CD14-positive monocyte (primary cell): ENCODE measurements at regions of chr10 and their contacts with region 1.

Region 1: GRCh38 chr10:110137142-110137545 is 70.3 kb upstream of the MXI1 start:
- DNase-seq: peak; percentile 75 to 92 (median 86)
- H3K4me3 ChIP-seq: peak overlapping the region; percentile 21 to 78 (median 69)
- H3K4me3 Mint-ChIP-seq: peak overlapping the region; percentile 44 to 76
- H3K27ac ChIP-seq: peak overlapping the region in 1 of 2 donors; percentile 77
- H3K27ac Mint-ChIP-seq: peak overlapping the region; percentile 66 to 94 (median 84)
- H3K4me1 ChIP-seq: peaks cover 32 to 38% of the 10 kb centered on the region in 2 donors
- H3K4me1 Mint-ChIP-seq: peaks cover 40% of the 10 kb centered on the region
- H3K27me3 ChIP-seq: no peaks in the 10 kb centered on the region
- H3K27me3 Mint-ChIP-seq: no peaks in the 10 kb centered on the region
- CTCF ChIP-seq: peak; percentile 76

Region 2: GRCh38 chr10:110210674-110211464 is 73.7 kb after region 1 on chr10:
- intact Hi-C with region 1: loop called (anchors 5 kb)
- DNase-seq: peak; percentile 93 to 96 (median 95)
- H3K4me3 ChIP-seq: peak overlapping the region; percentile 55 to 91 (median 63)
- H3K4me3 Mint-ChIP-seq: peak overlapping the region; percentile 93 to 94
- H3K27ac ChIP-seq: peak overlapping the region; percentile 54 to 93
- H3K27ac Mint-ChIP-seq: peak overlapping the region; percentile 93 to 99 (median 97)
- H3K4me1 ChIP-seq: peaks cover 57 to 71% of the 10 kb centered on the region in 2 donors
- H3K4me1 Mint-ChIP-seq: peaks cover 58% of the 10 kb centered on the region
- H3K27me3 ChIP-seq: peaks cover 0 to 7% of the 10 kb centered on the region in 2 donors
- H3K27me3 Mint-ChIP-seq: peaks cover 8 to 20% (median 14%) of the 10 kb centered on the region in 3 donors
- CTCF ChIP-seq: no peak

Region 3: GRCh38 chr10:110225756-110226542 is 88.8 kb after region 1 on chr10:
- intact Hi-C with region 1: loop called (anchors 2 kb)
- DNase-seq: peak; percentile 82 to 84 (median 84)
- H3K4me3 ChIP-seq: peak overlapping the region; percentile 94 to 99 (median 97)
- H3K4me3 Mint-ChIP-seq: peak overlapping the region; percentile 94 to 95
- H3K27ac ChIP-seq: peak overlapping the region; percentile 70 to 71
- H3K27ac Mint-ChIP-seq: peak overlapping the region; percentile 83 to 96 (median 91)
- H3K4me1 ChIP-seq: peaks cover 33 to 34% of the 10 kb centered on the region in 2 donors
- H3K4me1 Mint-ChIP-seq: peaks cover 41% of the 10 kb centered on the region
- H3K27me3 ChIP-seq: no peaks in the 10 kb centered on the region
- H3K27me3 Mint-ChIP-seq: no peaks in the 10 kb centered on the region
- CTCF ChIP-seq: peak; percentile 57

Region 4: GRCh38 chr10:110273474-110273873 is 136.3 kb after region 1 on chr10:
- intact Hi-C with region 1: loop called (anchors 2 to 5 kb)
- DNase-seq: peak; percentile 74 to 87 (median 85)
- H3K4me3 ChIP-seq: peak overlapping the region in 1 of 3 experiments; percentile 48
- H3K4me3 Mint-ChIP-seq: peak overlapping the region; percentile 57 to 81
- H3K27ac ChIP-seq: peak overlapping the region; percentile 47 to 68
- H3K27ac Mint-ChIP-seq: peak overlapping the region; percentile 69 to 95 (median 88)
- H3K4me1 ChIP-seq: peaks cover 31 to 35% of the 10 kb centered on the region in 2 donors
- H3K4me1 Mint-ChIP-seq: peaks cover 43% of the 10 kb centered on the region
- H3K27me3 ChIP-seq: no peaks in the 10 kb centered on the region
- H3K27me3 Mint-ChIP-seq: no peaks in the 10 kb centered on the region
- CTCF ChIP-seq: no peak

Region 5: GRCh38 chr10:110279407-110279986 is 142.4 kb after region 1 on chr10:
- intact Hi-C with region 1: loop called (anchors 2 to 5 kb)
- DNase-seq: peak; percentile 70 to 82 (median 76)
- H3K4me3 ChIP-seq: peak overlapping the region in 2 of 3 experiments; percentile 19 to 27
- H3K4me3 Mint-ChIP-seq: peak overlapping the region in 1 of 2 donors; percentile 63
- H3K27ac ChIP-seq: peak overlapping the region in 1 of 2 donors; percentile 57
- H3K27ac Mint-ChIP-seq: peak overlapping the region in 5 of 7 donors; percentile 7 to 77 (median 70)
- H3K4me1 ChIP-seq: peaks cover 4 to 6% of the 10 kb centered on the region in 2 donors
- H3K4me1 Mint-ChIP-seq: peaks cover 7% of the 10 kb centered on the region
- H3K27me3 ChIP-seq: no peaks in the 10 kb centered on the region
- H3K27me3 Mint-ChIP-seq: no peaks in the 10 kb centered on the region
- CTCF ChIP-seq: peak; percentile 70

Region 6: DNA sequence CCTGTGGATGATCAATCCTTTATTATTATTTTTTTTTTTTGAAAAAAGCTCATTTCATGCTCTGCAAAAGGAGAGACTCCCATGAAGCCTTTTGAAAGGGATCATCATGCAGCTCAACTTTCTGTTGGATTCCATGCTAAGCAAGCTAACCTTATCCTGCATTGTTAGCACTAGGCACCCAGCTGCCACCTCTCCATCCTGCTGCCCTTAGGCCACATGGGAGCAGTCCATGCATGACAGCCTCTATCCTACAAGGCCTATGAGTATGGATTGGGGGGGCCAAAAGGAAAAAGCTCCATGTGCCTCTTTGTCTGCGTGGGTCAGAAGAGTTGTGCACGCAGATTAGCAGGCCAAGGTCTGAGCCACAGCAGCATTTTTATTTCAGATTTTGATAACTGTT is 148.4 kb after region 1 on chr10:
- intact Hi-C with region 1: loop called in 1 of 2 experiments (anchors 5 kb)
- DNase-seq: no peak
- H3K4me3 ChIP-seq: no peak overlapping the region
- H3K4me3 Mint-ChIP-seq: no peak overlapping the region
- H3K27ac ChIP-seq: no peak overlapping the region
- H3K27ac Mint-ChIP-seq: no peak overlapping the region
- H3K4me1 ChIP-seq: no peaks in the 10 kb centered on the region
- H3K4me1 Mint-ChIP-seq: no peaks in the 10 kb centered on the region
- H3K27me3 ChIP-seq: no peaks in the 10 kb centered on the region
- H3K27me3 Mint-ChIP-seq: no peaks in the 10 kb centered on the region
- CTCF ChIP-seq: no peak